Activated naive CD4-positive, alpha-beta T cell treated with anti-CD3 and anti-CD28 coated beads for 36 hours (primary cell): ENCODE measurements at regions of chrX and their contacts with region 1.

Region 1: DNA sequence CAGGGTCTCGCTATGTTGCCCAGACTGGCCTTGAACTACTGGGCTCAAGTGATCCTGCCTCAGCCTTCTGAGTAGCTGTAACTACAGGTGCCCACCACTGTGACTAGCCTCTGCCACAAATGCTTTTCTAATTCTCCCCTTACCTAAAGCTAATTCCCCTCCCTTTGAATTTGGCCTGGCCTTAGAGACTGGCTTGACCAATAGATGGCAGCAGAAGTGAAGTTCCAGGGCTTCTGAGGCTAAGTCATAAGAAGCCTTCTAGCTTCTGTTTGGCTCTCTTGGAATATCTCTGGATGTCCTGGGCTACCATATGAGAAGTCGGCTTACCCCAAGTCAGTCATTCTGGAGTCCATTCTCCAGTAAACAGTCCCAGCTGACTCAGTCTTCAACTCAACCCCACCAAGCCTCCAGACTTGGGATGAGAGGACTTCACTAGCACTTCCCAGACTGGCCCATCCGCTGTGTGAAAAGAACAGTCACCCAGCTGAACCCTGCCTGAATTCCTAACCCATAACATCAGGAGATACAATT is 61.0 kb downstream of the HPRT1 start:
- DNase-seq: peak; percentile 8
- H3K4me3 Mint-ChIP-seq: no peak overlapping the region
- H3K27ac Mint-ChIP-seq: no peak overlapping the region
- H3K4me1 Mint-ChIP-seq: peaks cover 3% of the 10 kb centered on the region
- H3K27me3 Mint-ChIP-seq: no peaks in the 10 kb centered on the region

Region 2: GRCh38 chrX:133985164-133985966 is 535.6 kb before region 1 on chrX and contains the start of gene GPC3:
- CTCF ChIA-PET with region 1: no interaction called
- intact Hi-C with region 1: no loop called
- DNase-seq: peak; percentile 37
- H3K4me3 Mint-ChIP-seq: peak within 1 kb of the TSS; percentile 57
- H3K27ac Mint-ChIP-seq: no peak within 1 kb of the TSS
- H3K4me1 Mint-ChIP-seq: peaks cover 3% of the 10 kb centered on the region
- H3K27me3 Mint-ChIP-seq: peaks cover 12% of the 10 kb centered on the region
- total RNA-seq, gene GPC3: 0.43 to 0.49 TPM

Region 3: GRCh38 chrX:134246282-134246681 is 274.6 kb before region 1 on chrX:
- CTCF ChIA-PET with region 1: no interaction called
- intact Hi-C with region 1: no loop called
- DNase-seq: no peak
- H3K4me3 Mint-ChIP-seq: no peak overlapping the region
- H3K27ac Mint-ChIP-seq: no peak overlapping the region
- H3K4me1 Mint-ChIP-seq: peaks cover 11% of the 10 kb centered on the region
- H3K27me3 Mint-ChIP-seq: no peaks in the 10 kb centered on the region

Region 4: DNA sequence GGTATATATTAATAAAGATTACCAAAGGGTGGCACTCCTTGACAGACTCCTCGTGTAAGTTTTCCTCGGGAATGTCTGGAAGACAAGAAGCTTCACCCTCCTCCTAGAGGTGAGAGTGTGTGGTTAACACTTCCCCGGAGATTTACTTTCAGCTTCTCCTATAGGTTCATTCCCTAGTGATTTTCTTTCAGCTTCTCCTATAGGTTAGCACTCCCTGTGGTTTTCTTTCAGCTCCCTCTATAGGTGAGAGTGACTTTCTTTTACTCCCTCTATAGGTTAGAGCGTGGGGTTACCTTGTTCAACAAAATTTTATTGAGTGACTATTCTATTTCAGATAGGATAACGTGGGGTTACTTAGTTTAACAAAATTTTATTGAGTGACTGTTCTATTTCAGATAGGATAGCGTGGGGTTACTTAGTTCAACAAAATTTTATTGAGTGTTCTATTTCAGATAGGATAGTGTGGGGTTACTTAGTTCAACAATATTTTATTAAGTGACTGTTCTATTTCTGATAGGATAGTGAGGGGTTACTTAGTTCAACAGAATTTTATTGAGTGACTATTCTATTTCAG is 243.4 kb after region 1 on chrX:
- CTCF ChIA-PET with region 1: interaction called, 4 read pairs
- intact Hi-C with region 1: loop called (anchors 5 kb)
- DNase-seq: no peak
- H3K4me3 Mint-ChIP-seq: no peak overlapping the region
- H3K27ac Mint-ChIP-seq: no peak overlapping the region
- H3K4me1 Mint-ChIP-seq: peaks cover 3% of the 10 kb centered on the region
- H3K27me3 Mint-ChIP-seq: no peaks in the 10 kb centered on the region